Endothelial cell of umbilical vein (primary cell): ENCODE measurements at regions of chr16 and their contacts with region 1.

Region 1: GRCh38 chr16:29848420-29849297 is 14.4 kb downstream of the CDIPT start:
- DNase-seq: peak; percentile 63
- H3K4me3 ChIP-seq: no peak overlapping the region
- H3K27ac ChIP-seq: no peak overlapping the region
- H3K4me1 ChIP-seq: peaks cover 5% of the 10 kb centered on the region
- H3K27me3 ChIP-seq: no peaks in the 10 kb centered on the region
- CTCF ChIP-seq: peak; percentile 83 to 97
- POLR2A ChIP-seq: no peak

Region 2: GRCh38 chr16:29784901-29785500 is 63.7 kb before region 1 on chr16:
- CTCF ChIA-PET with region 1: interaction called, 34 read pairs
- POLR2A ChIA-PET with region 1: no interaction called
- dilution Hi-C with region 1: no loop called
- intact Hi-C with region 1: no loop called
- DNase-seq: peak; percentile 76
- H3K4me3 ChIP-seq: peak overlapping the region in 1 of 3 experiments; percentile 5
- H3K27ac ChIP-seq: no peak overlapping the region
- H3K4me1 ChIP-seq: peaks cover 10% of the 10 kb centered on the region
- H3K27me3 ChIP-seq: peaks cover 7 to 16% of the 10 kb centered on the region in 2 experiments
- CTCF ChIP-seq: peak; percentile 91 to 98
- POLR2A ChIP-seq: no peak

Region 3: DNA sequence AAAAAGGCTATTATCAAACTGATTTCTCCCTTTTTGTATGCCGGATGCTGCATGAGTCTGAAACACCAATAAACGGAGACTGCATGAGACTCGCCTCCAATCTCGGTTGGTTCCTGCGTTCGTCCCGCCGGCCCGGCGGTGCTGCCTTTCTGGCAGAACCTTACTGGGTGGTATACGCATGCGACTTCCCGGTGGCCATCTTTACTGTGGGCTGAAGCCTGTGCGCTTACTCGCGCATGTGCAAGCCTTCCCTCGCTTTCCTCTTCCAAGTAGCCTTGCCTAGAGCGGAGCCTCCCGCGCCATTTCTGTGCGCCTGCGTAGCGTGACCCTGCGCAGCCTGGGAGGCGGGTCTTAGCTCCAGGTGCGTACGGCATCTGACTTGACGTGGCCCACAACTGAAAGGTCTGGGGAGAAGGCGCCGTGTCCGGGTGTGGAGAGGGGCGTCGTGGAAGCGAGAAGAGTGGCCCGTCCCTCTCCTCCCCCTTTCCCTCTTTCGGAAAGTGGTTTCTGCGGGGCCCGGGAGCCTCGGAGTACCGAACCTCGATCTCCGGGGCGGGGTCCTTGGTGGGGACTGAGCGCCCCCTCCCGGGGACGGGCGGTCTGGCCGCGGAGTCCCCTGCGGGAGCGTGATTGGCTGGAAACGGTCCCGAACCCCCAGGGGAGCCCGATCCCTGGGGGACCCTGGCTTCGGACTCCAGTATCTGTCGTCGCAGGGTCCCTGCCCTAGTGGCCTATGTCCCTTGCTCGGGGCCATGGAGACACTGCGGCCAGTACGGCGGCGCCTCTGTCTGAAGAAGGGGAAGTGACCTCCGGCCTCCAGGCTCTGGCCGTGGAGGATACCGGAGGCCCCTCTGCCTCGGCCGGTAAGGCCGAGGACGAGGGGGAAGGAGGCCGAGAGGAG is 32.6 kb before region 1 on chr16 and contains the start of gene PAGR1:
- CTCF ChIA-PET with region 1: interaction called, 140 read pairs
- POLR2A ChIA-PET with region 1: interaction called, 7 read pairs
- dilution Hi-C with region 1: no loop called
- intact Hi-C with region 1: loop called (anchors 2 kb)
- DNase-seq: peak; percentile 100
- H3K4me3 ChIP-seq: peak within 1 kb of the TSS; percentile 65 to 85 (median 81)
- H3K27ac ChIP-seq: peak within 1 kb of the TSS; percentile 47
- H3K4me1 ChIP-seq: peaks cover 35% of the 10 kb centered on the region
- H3K27me3 ChIP-seq: no peaks in the 10 kb centered on the region
- CTCF ChIP-seq: peak; percentile 95 to 98
- POLR2A ChIP-seq: peak; percentile 80
- total RNA-seq, gene PAGR1: 24.2 and 26.3 TPM in 2 replicates

Region 4: GRCh38 chr16:29862884-29863668 is 14.4 kb after region 1 on chr16 and contains the start of gene CDIPT:
- CTCF ChIA-PET with region 1: interaction called, 24 read pairs
- POLR2A ChIA-PET with region 1: no interaction called
- dilution Hi-C with region 1: no loop called
- intact Hi-C with region 1: no loop called
- DNase-seq: peak; percentile 96
- H3K4me3 ChIP-seq: peak within 1 kb of the TSS; percentile 55 to 73 (median 64)
- H3K27ac ChIP-seq: peak within 1 kb of the TSS; percentile 100
- H3K4me1 ChIP-seq: peaks cover 7% of the 10 kb centered on the region
- H3K27me3 ChIP-seq: no peaks in the 10 kb centered on the region
- CTCF ChIP-seq: peak; percentile 53 to 85
- POLR2A ChIP-seq: peak; percentile 51
- total RNA-seq, gene CDIPT: 67.3 and 68.7 TPM in 2 replicates

Region 5: GRCh38 chr16:29906520-29907244 is 58.0 kb after region 1 on chr16:
- CTCF ChIA-PET with region 1: no interaction called
- POLR2A ChIA-PET with region 1: no interaction called
- dilution Hi-C with region 1: no loop called
- intact Hi-C with region 1: no loop called
- DNase-seq: no peak
- H3K4me3 ChIP-seq: no peak overlapping the region
- H3K27ac ChIP-seq: no peak overlapping the region
- H3K4me1 ChIP-seq: no peaks in the 10 kb centered on the region
- H3K27me3 ChIP-seq: no peaks in the 10 kb centered on the region
- CTCF ChIP-seq: no peak
- POLR2A ChIP-seq: no peak

Region 6: DNA sequence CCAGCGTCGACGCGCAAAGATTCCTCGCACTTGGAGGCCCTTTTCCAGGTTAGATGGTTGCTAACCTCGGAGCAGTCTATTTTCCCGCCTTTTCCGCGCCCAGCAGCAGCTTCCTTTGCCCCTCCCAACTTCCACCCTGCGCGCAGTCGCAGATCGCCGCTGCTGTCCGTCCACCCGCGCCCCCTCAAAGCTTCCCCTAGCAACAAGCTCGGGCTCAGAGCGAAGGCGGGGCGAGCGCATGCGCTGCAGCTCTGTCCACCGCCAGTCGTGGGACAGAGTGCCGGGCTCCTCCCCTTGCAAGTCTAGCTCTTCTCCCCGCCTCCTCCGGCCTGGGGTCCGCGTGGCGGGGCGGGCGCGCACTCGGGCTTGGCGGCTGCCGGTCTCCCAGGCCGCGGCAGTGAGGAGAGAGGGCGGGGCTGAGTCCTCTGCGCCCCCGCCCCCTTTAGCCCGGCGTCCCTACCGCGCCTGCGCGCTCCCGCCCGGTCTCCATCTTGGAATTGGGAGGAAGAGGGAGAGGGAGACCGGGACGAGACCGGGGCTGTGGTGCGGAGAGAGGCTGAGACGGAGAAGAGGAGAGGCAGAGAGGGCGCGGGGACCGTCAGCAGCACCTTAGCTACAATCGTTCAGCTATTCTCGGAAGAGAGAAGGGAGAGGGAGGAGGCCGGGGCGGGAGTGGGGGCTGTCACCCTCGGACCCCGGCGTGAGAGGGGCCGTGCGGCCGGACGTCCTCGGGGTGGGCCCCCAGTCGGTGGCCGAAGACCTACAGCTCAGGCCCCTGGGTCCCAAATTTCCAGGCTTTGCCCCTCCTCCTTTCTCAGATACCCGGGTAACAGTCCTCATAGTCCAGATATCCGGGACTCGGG is 125.0 kb after region 1 on chr16 and contains the start of gene TAOK2:
- CTCF ChIA-PET with region 1: interaction called, 14 read pairs
- POLR2A ChIA-PET with region 1: no interaction called
- dilution Hi-C with region 1: no loop called
- intact Hi-C with region 1: no loop called
- DNase-seq: peak; percentile 100
- H3K4me3 ChIP-seq: peak within 1 kb of the TSS; percentile 79 to 95 (median 94)
- H3K27ac ChIP-seq: peak within 1 kb of the TSS; percentile 81
- H3K4me1 ChIP-seq: peaks cover 38% of the 10 kb centered on the region
- H3K27me3 ChIP-seq: no peaks in the 10 kb centered on the region
- CTCF ChIP-seq: no peak
- POLR2A ChIP-seq: peak; percentile 89
- total RNA-seq, gene TAOK2: 112 and 114 TPM in 2 replicates

Region 7: GRCh38 chr16:30521873-30522641 is 673.4 kb after region 1 on chr16:
- CTCF ChIA-PET with region 1: no interaction called
- POLR2A ChIA-PET with region 1: no interaction called
- dilution Hi-C with region 1: no loop called
- intact Hi-C with region 1: no loop called
- DNase-seq: no peak
- H3K4me3 ChIP-seq: no peak overlapping the region
- H3K27ac ChIP-seq: no peak overlapping the region
- H3K4me1 ChIP-seq: no peaks in the 10 kb centered on the region
- H3K27me3 ChIP-seq: no peaks in the 10 kb centered on the region
- CTCF ChIP-seq: no peak
- POLR2A ChIP-seq: no peak